ENCODE measurements at regions of chr3 and their contacts with region 1.

Region 1: DNA sequence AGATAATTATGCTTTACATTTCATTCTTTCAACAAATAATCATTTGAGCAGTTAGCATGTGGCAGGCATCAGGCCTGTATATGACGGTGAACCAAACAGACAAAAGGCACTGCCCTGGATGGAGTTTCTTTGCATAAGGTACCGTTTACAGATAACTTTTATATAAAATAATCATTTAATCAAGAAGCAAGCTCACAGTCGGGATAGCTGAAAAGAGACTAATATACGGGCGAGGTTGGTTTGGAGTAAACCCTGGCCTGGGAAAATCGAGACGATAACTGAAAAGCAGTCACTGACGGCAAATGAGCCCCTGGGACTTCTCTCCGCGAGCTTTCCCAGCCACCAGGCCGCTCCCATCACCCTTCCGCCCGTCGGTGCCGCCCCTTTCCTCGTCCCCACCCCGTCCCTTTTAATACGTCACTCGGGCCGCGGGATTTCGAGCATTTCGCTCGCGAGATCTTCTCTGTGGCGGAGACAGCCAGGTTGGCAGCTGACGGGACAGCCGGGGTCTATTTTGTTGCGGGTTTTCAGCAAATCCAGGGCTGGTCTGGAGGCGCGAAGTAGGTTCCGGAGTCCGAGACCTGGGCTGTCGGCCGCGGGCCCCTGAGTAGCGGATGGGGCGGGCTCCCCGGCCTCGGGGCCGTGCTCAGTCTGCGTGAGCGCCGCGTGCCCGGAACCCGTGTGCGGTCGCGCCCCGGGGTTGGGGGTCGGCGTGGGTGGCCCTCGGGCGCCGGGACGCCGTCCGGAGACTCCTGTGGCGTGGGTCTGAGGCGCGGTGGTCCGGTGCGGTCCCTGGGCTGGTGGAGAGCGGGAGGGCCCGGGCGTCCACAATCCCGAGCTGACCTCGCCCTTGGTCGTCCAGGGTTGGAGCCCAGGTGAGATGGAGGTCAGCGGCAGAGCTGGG is at the start of gene NMD3:
- DNase-seq: peak; percentile 97
- H3K4me3 Mint-ChIP-seq: peak within 1 kb of the TSS; percentile 87
- H3K27ac Mint-ChIP-seq: peak within 1 kb of the TSS; percentile 88
- H3K4me1 Mint-ChIP-seq: peaks cover 28% of the 10 kb centered on the region
- H3K27me3 Mint-ChIP-seq: peaks cover 2% of the 10 kb centered on the region
- total RNA-seq, gene NMD3: 58.1 to 59.4 TPM

Region 2: GRCh38 chr3:160565442-160566403 is 655.4 kb before region 1 on chr3 and contains the start of gene KPNA4:
- CTCF ChIA-PET with region 1: no interaction called
- intact Hi-C with region 1: loop called (anchors 1 kb)
- DNase-seq: peak; percentile 97
- H3K4me3 Mint-ChIP-seq: peak within 1 kb of the TSS; percentile 93
- H3K27ac Mint-ChIP-seq: peak within 1 kb of the TSS; percentile 97
- H3K4me1 Mint-ChIP-seq: peaks cover 40% of the 10 kb centered on the region
- H3K27me3 Mint-ChIP-seq: no peaks in the 10 kb centered on the region
- total RNA-seq, gene KPNA4: 43.2 to 59.4 TPM

Region 3: GRCh38 chr3:160739079-160739478 is 482.0 kb before region 1 on chr3:
- CTCF ChIA-PET with region 1: no interaction called
- intact Hi-C with region 1: no loop called
- DNase-seq: no peak
- H3K4me3 Mint-ChIP-seq: no peak overlapping the region
- H3K27ac Mint-ChIP-seq: no peak overlapping the region
- H3K4me1 Mint-ChIP-seq: no peaks in the 10 kb centered on the region
- H3K27me3 Mint-ChIP-seq: peaks cover 19% of the 10 kb centered on the region

Region 4: DNA sequence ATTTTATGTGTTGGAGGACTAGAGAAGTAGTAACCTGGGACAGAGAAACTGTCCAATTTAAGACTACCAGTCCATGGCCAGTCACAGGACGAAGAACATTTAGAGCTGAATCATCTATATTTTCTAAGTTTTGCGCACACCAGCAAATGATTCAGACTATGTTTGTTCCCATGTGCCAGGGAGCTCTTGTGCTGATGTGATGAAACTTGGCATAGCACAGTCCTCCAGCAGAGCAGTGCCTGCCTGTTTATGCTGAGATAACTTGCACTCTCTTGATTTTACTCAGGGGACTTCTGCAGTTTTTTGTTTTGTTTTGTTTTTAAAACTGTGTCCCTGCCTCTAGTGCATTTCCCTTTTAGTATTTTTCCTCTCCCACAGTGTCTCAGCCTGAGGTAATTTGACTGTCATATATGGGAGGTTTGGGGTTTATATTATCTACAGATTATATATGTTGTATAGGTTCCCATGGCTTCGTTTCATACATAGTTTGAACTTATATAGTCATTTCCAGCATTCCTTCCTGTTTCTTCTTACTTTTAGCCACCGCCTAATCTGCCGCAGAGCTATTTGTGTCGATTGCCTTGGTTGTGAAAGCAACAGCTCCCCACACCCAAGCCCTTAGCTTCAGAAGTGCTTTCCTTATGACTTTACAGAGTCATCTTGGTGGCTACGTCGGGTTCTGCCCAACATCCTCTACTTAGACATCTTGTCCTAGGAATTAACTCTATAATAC is 419.6 kb before region 1 on chr3:
- CTCF ChIA-PET with region 1: no interaction called
- intact Hi-C with region 1: loop called (anchors 1 kb)
- DNase-seq: peak; percentile 72
- H3K4me3 Mint-ChIP-seq: no peak overlapping the region
- H3K27ac Mint-ChIP-seq: peak overlapping the region; percentile 69
- H3K4me1 Mint-ChIP-seq: peaks cover 10% of the 10 kb centered on the region
- H3K27me3 Mint-ChIP-seq: no peaks in the 10 kb centered on the region

Region 5: DNA sequence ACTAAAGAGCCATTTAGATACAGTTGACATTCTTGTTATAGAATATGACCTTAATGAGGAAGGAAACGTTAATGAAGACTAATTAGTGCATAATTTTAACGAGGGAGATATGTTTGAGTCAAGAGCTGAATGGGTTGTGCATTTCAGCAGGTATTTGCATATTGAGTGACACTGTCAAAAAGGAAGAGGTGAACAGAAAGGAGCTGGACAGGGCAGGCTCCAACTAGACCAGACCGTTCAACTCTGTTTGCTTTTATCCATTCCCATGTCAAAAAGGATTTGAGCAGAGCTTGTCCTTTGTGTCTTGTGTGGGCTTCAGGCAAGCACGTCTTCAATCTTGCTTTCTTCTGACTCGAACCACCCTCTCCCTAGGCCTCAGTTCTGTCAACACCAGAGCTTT is 156.7 kb before region 1 on chr3:
- CTCF ChIA-PET with region 1: no interaction called
- intact Hi-C with region 1: no loop called
- DNase-seq: no peak
- H3K4me3 Mint-ChIP-seq: no peak overlapping the region
- H3K27ac Mint-ChIP-seq: no peak overlapping the region
- H3K4me1 Mint-ChIP-seq: no peaks in the 10 kb centered on the region
- H3K27me3 Mint-ChIP-seq: no peaks in the 10 kb centered on the region

Region 6: GRCh38 chr3:161117646-161118045 is 103.5 kb before region 1 on chr3:
- CTCF ChIA-PET with region 1: no interaction called
- intact Hi-C with region 1: no loop called
- DNase-seq: no peak
- H3K4me3 Mint-ChIP-seq: no peak overlapping the region
- H3K27ac Mint-ChIP-seq: no peak overlapping the region
- H3K4me1 Mint-ChIP-seq: no peaks in the 10 kb centered on the region
- H3K27me3 Mint-ChIP-seq: peaks cover 10% of the 10 kb centered on the region

Region 7: GRCh38 chr3:161310649-161311423 is 89.7 kb after region 1 on chr3:
- CTCF ChIA-PET with region 1: no interaction called
- intact Hi-C with region 1: loop called (anchors 2 kb)
- DNase-seq: peak; percentile 69
- H3K4me3 Mint-ChIP-seq: no peak overlapping the region
- H3K27ac Mint-ChIP-seq: peak overlapping the region; percentile 43
- H3K4me1 Mint-ChIP-seq: peaks cover 49% of the 10 kb centered on the region
- H3K27me3 Mint-ChIP-seq: no peaks in the 10 kb centered on the region

Region 8: DNA sequence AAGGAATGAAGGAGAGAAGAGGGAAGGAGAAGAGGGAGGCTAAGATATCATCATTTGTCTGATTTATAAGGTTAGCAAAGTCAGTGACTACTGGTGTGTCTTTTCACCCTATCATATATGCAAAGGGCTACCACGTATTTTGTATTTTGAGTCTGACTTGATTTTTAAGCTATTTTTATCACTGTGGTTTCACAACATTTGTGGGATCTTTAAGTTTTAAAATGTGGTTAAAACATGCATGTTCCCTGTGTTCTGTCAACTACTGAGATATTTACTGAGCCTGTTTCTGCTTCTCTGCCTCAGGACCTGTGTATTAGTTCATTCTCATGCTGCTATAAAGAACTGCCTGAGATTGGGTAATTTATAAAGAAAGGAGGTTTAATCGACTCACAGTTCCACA is 172.7 kb after region 1 on chr3:
- CTCF ChIA-PET with region 1: no interaction called
- intact Hi-C with region 1: loop called (anchors 2 kb)
- DNase-seq: no peak
- H3K4me3 Mint-ChIP-seq: no peak overlapping the region
- H3K27ac Mint-ChIP-seq: no peak overlapping the region
- H3K4me1 Mint-ChIP-seq: peaks cover 55% of the 10 kb centered on the region
- H3K27me3 Mint-ChIP-seq: no peaks in the 10 kb centered on the region

Region 9: DNA sequence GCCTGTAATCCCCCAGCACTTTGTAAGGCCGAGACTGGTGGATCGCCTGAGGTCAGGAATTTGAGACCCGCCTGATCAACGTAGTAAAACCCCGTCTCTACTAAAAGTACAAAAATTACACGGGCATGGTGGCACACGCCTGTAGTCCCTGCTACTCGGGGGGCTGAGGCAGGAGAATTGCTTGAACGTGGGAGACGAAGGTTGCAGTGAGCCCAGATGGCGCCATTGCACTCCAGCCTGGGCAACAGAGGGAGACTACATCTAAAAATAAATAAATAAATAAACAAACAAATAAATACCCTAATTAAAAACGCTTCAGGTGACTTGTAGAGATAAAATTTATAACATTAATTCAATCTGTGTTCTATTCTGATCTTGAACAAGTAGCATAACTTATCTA is 1197.1 kb after region 1 on chr3:
- CTCF ChIA-PET with region 1: no interaction called
- intact Hi-C with region 1: no loop called
- DNase-seq: no peak
- H3K4me3 Mint-ChIP-seq: no peak overlapping the region
- H3K27ac Mint-ChIP-seq: no peak overlapping the region
- H3K4me1 Mint-ChIP-seq: no peaks in the 10 kb centered on the region
- H3K27me3 Mint-ChIP-seq: no peaks in the 10 kb centered on the region

Measured in activated naive CD4-positive, alpha-beta T cell treated with anti-CD3 and anti-CD28 coated beads for 36 hours (primary cell).